Prostate gland (tissue), 2 donors: ENCODE measurements at regions of chr1 and their contacts with region 1.

Region 1: DNA sequence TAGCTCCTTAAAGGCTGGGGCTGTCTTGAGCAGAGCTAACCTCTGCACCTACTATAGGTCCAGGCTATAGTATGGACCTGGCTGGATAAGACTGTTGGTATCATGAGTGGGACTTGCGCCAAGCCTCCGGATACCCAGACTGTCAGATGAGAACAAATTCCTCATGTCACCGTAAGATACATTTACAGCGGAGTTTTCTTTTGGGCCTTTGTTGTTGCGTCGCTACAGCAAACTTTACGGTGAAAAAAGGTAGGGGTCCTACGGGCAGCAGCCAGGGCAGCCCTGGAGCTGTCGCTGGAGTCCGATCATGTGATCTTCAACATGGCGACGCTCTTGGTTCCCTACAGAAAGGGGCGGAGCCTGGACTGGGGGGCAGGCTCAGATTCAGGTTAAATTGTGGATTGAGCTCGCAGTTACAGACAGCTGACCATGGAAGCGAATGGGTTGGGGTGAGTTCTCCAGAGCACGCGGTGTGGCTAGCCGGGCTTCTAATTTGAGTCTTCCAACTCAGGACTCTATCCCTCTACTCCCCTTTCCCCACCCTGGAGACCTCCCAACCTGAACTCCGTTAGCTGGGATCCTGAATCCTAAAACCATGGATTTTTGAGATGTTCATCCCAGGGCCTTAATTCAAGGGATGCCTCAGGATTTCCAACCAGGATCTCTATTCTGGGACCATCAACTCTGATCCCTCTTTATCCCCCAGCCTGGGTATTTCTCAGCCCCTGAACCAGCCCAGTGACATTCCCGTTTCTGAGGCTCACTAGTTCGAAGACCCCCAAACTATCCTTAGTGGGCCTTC is at the start of gene UROD:
- DNase-seq: peak; percentile 92
- H3K4me3 ChIP-seq: peak within 1 kb of the TSS; percentile 74 to 89
- H3K27ac ChIP-seq: peak within 1 kb of the TSS; percentile 71 to 75
- H3K4me1 ChIP-seq: peaks cover 16% of the 10 kb centered on the region
- H3K27me3 ChIP-seq: no peaks in the 10 kb centered on the region
- CTCF ChIP-seq: peak in 2 of 4 experiments; percentile 6 to 11
- POLR2A ChIP-seq: peak; percentile 33
- total RNA-seq, gene UROD: 57.7 to 152 TPM

Region 2: GRCh38 chr1:44775078-44775929 is 236.7 kb before region 1 on chr1 and contains the start of gene RPS8:
- intact Hi-C with region 1: loop called (anchors 5 kb)
- DNase-seq: peak; percentile 92
- H3K4me3 ChIP-seq: peak within 1 kb of the TSS; percentile 72 to 80
- H3K27ac ChIP-seq: peak within 1 kb of the TSS; percentile 92 to 94
- H3K4me1 ChIP-seq: peaks cover 5% of the 10 kb centered on the region
- H3K27me3 ChIP-seq: no peaks in the 10 kb centered on the region
- CTCF ChIP-seq: peak in 3 of 4 experiments; percentile 9 to 35 (median 10)
- POLR2A ChIP-seq: peak; percentile 85
- total RNA-seq, gene RPS8: 1,669 to 3,439 TPM

Region 3: GRCh38 chr1:44835738-44836675 is 176.0 kb before region 1 on chr1:
- intact Hi-C with region 1: loop called (anchors 5 kb)
- DNase-seq: peak; percentile 71
- H3K4me3 ChIP-seq: no peak overlapping the region
- H3K27ac ChIP-seq: no peak overlapping the region
- H3K4me1 ChIP-seq: no peaks in the 10 kb centered on the region
- H3K27me3 ChIP-seq: no peaks in the 10 kb centered on the region
- CTCF ChIP-seq: peak; percentile 67 to 80 (median 71)
- POLR2A ChIP-seq: no peak

Region 4: DNA sequence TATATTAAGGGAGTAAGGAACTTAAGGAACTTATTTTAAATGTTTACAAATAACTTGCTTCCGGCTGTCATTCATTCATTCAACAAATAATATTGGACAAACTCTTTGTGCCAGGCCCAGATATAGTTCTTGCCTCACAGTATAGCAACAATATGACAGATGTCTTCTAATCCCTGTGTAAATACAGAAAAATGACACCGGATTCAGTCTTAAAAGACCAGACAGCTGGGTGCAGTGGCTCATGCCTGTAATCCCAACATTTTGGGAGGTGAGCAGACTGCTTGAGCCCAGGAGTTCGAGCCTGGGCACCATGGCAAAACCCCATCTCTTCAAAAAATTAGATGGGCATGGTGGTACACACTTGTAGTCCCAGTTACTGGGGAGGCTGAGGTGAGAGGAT is 49.3 kb before region 1 on chr1:
- intact Hi-C with region 1: no loop called
- DNase-seq: no peak
- H3K4me3 ChIP-seq: no peak overlapping the region
- H3K27ac ChIP-seq: no peak overlapping the region
- H3K4me1 ChIP-seq: no peaks in the 10 kb centered on the region
- H3K27me3 ChIP-seq: no peaks in the 10 kb centered on the region
- CTCF ChIP-seq: no peak
- POLR2A ChIP-seq: no peak

Region 5: GRCh38 chr1:45326627-45327623 is 314.9 kb after region 1 on chr1 and contains the start of gene HPDL:
- intact Hi-C with region 1: no loop called
- DNase-seq: peak; percentile 46
- H3K4me3 ChIP-seq: peak within 1 kb of the TSS; percentile 29 to 36
- H3K27ac ChIP-seq: no peak within 1 kb of the TSS
- H3K4me1 ChIP-seq: peaks cover 6% of the 10 kb centered on the region
- H3K27me3 ChIP-seq: no peaks in the 10 kb centered on the region
- CTCF ChIP-seq: no peak
- POLR2A ChIP-seq: no peak
- total RNA-seq, gene HPDL: 0.41 to 1.5 TPM